ENCODE measurements at regions of chr21 and their contacts with region 1.

Region 1: DNA sequence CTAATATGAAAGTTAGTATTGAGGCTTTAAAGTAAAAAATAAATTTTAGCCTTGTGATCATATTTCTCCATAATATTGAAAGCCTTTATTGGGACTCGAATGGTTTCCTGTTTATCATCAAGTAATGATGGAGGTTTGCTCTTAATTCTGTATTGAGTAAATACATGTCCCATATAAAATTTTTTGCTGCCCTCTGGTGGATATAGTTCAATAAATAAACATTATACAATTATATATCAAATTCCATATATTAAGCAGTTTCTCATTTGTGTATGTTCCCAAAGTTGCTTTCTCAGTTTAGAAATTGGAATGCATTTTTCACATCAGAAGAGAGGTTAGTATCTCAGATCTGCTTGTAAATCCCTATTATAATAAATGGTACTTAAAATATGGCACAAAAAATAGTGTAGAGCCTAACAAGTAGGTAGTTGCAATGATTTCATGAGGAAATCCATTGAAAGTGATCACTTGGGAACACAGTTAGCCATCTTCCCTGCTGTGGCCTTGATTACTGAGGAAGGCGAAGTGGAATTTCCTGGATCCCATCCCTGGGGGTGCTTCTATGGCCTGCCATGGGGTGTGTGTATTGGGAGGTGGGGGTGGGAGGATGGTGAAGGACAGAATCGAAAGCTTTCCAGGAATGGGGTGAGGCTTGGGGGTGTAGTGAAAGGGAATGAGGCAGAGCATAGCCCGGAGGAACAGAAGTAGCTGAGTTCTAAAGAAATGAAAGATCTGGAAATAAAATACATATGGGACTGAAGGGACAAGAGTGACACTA is 84.1 kb upstream of the C21orf91 start:
- DNase-seq: no peak
- H3K4me3 ChIP-seq: no peak overlapping the region
- H3K27me3 ChIP-seq: no peaks in the 10 kb centered on the region
- CTCF ChIP-seq: no peak

Region 2: DNA sequence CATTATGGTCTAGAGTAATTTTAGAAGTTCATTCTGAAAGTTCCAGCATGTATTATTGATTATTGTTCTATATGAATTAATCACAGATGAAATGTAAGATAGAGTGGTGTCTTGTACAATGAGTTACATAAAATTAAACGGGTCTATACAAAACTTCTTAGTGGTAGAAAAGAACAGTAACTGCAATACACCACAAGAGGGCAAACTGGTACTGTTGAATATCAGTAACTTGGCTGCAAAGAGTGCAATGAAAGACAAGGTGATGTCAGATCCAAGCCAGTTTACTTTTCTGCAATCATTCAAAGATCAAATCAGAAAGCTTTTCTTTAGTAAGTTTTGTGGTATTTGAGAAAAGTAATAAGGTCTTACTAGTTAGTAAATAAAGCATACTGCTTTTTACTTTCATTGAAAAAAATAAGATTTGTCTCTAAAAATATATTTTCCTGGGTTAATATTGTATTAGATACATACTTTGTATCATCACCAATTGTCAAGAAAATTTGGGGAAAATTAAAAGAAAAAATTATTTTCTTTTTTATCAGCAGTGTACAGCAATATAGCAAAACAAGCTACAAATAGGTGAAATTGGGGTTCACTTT is 224.1 kb before region 1 on chr21:
- CTCF ChIA-PET with region 1: interaction called, 28 read pairs
- POLR2A ChIA-PET with region 1: no interaction called
- DNase-seq: peak; percentile 16
- H3K4me3 ChIP-seq: no peak overlapping the region
- H3K27me3 ChIP-seq: no peaks in the 10 kb centered on the region
- CTCF ChIP-seq: peak; percentile 74

Region 3: DNA sequence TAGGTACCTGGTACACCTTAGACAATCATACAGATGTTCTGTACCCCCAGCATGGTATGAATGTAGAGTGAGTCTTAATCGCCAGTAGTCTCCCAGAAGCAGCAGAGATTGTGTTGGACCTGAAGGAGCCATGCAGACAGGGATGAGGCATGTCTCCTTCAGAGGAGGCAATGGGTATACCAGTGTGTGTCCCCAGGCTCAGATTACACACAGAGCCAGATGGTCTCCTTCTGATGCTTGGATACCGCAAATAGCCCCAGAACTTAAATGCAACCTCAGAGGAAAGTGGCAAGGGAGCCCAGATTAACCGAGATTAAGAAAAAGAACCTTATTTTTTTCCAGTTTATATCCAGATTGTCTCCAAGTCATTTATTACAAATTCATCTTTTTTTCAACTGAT is 12.8 kb after region 1 on chr21:
- CTCF ChIA-PET with region 1: no interaction called
- POLR2A ChIA-PET with region 1: no interaction called
- DNase-seq: no peak
- H3K4me3 ChIP-seq: no peak overlapping the region
- H3K27me3 ChIP-seq: no peaks in the 10 kb centered on the region
- CTCF ChIP-seq: no peak

Measured in BJ (cell line).